ENCODE measurements at regions of chr15 and their contacts with region 1.

Region 1: GRCh38 chr15:88904624-88905327 is 8.4 kb downstream of the MFGE8 start:
- DNase-seq: peak; percentile 94
- ATAC-seq: peak; percentile 91
- H3K4me3 Mint-ChIP-seq: no peak overlapping the region
- H3K27ac Mint-ChIP-seq: peak overlapping the region; percentile 39; the same call in 1 of the 2 replicates
- H3K4me1 Mint-ChIP-seq: peaks cover 64% of the 10 kb centered on the region
- H3K27me3 Mint-ChIP-seq: no peaks in the 10 kb centered on the region; the same call in 1 of the 2 replicates
- CTCF ChIP-seq: peak; percentile 99

Region 2: GRCh38 chr15:88878720-88879184 is 26.0 kb before region 1 on chr15:
- CTCF ChIA-PET with region 1: interaction called, 16 read pairs
- POLR2A ChIA-PET with region 1: no interaction called
- DNase-seq: peak; percentile 86
- ATAC-seq: peak; percentile 92
- H3K4me3 Mint-ChIP-seq: no peak overlapping the region
- H3K27ac Mint-ChIP-seq: peak overlapping the region; percentile 85; the same call in 1 of the 2 replicates
- H3K4me1 Mint-ChIP-seq: peaks cover 14% of the 10 kb centered on the region
- H3K27me3 Mint-ChIP-seq: no peaks in the 10 kb centered on the region
- CTCF ChIP-seq: peak; percentile 60

Region 3: DNA sequence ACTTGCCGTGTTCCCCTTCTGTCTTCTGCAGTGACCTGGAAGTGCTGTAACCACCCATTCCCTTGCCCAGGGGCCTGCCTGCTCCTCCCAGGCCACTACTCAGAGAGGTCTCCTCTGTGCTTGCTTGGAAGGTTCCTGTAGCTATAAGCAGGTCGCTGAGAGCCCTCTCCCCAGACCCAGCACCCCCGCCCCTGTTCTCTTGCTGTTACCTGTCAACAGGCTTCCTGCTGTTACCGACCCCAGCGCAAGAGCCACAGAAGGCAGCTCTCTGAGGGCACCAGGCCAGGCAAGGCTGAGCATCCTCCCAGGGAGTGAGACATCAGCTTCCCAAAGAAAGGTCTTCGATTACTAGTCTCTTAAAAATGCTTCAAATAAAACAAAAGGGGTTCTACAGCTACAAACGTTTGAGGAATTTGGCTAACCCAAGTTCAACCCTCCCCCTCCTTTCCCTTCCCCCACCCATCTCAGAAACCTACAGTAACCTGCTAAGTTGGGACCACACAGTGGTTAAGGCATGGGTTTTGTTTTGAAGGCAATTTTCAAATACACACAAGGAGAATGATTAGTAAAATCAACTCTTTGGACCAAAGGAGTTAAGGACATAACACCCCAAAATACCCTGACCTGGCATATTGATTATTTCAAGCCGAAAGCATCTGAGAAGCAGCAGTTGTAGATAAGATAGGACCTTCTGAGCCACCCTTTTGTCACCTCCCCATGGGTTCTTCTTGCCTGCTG is 83.3 kb after region 1 on chr15:
- CTCF ChIA-PET with region 1: interaction called, 38 read pairs
- POLR2A ChIA-PET with region 1: interaction called, 4 read pairs
- DNase-seq: peak; percentile 56
- ATAC-seq: peak; percentile 19
- H3K4me3 Mint-ChIP-seq: peak overlapping the region; percentile 49
- H3K27ac Mint-ChIP-seq: peak overlapping the region; percentile 99
- H3K4me1 Mint-ChIP-seq: peaks cover 93% of the 10 kb centered on the region
- H3K27me3 Mint-ChIP-seq: 0 out of 2 replicates have a peak, but pooled peaks cover 3% of the 10 kb centered on the region
- CTCF ChIP-seq: no peak

Region 4: GRCh38 chr15:89003865-89004725 is 99.3 kb after region 1 on chr15:
- CTCF ChIA-PET with region 1: interaction called, 226 read pairs
- POLR2A ChIA-PET with region 1: interaction called, 7 read pairs
- DNase-seq: peak; percentile 71
- ATAC-seq: peak; percentile 90
- H3K4me3 Mint-ChIP-seq: no peak overlapping the region
- H3K27ac Mint-ChIP-seq: peak overlapping the region; percentile 54; the same call in 1 of the 2 replicates
- H3K4me1 Mint-ChIP-seq: peaks cover 59% of the 10 kb centered on the region
- H3K27me3 Mint-ChIP-seq: no peaks in the 10 kb centered on the region; the same call in 1 of the 2 replicates
- CTCF ChIP-seq: 0 out of 2 replicates have a peak, but pooled peaks have one; percentile 23

Region 5: DNA sequence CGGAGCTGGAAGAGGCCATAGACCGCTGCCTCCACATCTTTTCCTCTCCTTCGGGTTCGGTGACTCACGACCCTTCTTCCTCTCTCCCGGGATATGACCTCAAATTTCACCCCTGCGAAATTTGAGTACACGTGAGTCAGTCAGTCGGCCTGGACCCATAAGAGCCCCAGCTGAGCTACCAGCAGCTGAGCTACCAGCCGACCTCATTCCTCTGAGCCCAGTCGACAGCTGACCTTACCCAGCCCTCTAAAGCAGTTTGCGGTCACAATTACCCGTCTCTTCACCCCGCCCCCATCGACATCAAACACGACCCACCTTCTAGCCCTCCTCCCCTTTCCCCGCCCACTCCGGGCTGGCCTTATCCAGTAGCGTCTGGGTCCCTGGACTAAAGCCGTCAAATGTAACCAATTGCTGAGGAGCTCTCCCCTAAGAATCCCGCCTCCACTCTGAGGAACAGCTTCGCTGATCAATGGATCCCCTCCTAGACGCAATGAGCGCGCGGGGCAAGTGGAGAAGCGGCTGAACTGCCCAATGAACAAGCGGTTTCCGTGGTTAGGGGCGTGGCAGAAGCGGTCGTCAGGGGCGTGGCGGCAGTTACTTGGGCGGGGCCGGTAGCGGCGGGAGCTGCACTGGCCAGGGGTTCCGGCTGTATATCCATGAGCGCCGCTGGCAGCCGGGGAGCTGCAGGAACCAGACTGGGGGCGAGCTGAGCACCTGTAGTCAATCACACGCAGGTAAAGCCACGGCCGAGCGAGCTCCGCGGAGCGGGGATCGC is 183.2 kb after region 1 on chr15 and contains the start of gene ABHD2:
- CTCF ChIA-PET with region 1: interaction called, 16 read pairs
- POLR2A ChIA-PET with region 1: no interaction called
- DNase-seq: peak; percentile 99
- ATAC-seq: peak; percentile 99
- H3K4me3 Mint-ChIP-seq: no peak within 1 kb of the TSS
- H3K27ac Mint-ChIP-seq: no peak within 1 kb of the TSS
- H3K4me1 Mint-ChIP-seq: peaks cover 36% of the 10 kb centered on the region
- H3K27me3 Mint-ChIP-seq: no peaks in the 10 kb centered on the region
- CTCF ChIP-seq: no peak
- total RNA-seq, gene ABHD2: 26.2 to 29.7 TPM (median 29.5 TPM) in 3 replicates

Measured in WTC11 (cell line).